Activated T-helper 1 cell treated with anti-CD3 and anti-CD28 coated beads, Interleukin-12 subunit alpha, Interleukin-12 subunit beta, Interleukin-2, Interleukin-4 antibody, amounts not matched to agents 30 ng/mL and 10 ng/mL and 1 ng/mL, durations not matched to agents 14 hours and 24 hours and 36 hours (primary cell): ENCODE measurements at regions of chr10 and their contacts with region 1.

Region 1: DNA sequence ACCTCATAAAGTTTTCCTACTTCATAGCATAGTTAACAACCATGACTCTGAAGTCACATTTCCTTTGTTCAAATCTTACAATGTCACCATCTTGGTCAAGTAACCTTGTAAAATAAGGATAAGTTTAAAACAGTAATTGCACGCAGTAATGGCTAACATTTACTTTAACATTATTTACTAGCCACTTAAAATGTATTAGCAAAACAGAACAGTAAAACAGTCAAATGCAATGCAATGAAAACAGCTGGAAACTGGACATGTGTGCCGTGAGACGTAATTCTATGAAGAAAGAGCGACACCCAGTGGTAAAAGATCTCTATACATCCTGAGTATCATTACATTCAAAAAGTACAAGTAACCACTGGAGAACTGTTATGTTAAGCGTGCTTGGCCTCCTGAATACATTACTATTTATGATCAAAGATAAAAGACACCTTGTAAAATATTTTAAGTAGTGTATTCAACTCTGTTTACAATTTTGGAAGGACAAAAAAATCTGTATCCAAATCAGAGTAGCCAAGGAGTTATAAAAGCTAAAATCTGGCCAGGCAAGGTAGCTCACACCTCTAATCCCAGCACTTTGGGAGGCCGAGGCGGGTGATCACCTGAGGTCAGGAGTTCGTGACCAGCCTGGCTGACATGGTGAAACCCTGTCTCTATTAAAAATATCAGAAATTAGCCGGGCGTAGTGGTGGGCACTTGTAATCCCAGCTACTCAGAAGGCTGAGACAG is 27.2 kb downstream of the ATE1 start:
- DNase-seq: no peak
- H3K4me3 Mint-ChIP-seq: no peak overlapping the region
- H3K27ac Mint-ChIP-seq: no peak overlapping the region
- H3K4me1 Mint-ChIP-seq: peaks cover 5% of the 10 kb centered on the region
- H3K27me3 Mint-ChIP-seq: no peaks in the 10 kb centered on the region

Region 2: DNA sequence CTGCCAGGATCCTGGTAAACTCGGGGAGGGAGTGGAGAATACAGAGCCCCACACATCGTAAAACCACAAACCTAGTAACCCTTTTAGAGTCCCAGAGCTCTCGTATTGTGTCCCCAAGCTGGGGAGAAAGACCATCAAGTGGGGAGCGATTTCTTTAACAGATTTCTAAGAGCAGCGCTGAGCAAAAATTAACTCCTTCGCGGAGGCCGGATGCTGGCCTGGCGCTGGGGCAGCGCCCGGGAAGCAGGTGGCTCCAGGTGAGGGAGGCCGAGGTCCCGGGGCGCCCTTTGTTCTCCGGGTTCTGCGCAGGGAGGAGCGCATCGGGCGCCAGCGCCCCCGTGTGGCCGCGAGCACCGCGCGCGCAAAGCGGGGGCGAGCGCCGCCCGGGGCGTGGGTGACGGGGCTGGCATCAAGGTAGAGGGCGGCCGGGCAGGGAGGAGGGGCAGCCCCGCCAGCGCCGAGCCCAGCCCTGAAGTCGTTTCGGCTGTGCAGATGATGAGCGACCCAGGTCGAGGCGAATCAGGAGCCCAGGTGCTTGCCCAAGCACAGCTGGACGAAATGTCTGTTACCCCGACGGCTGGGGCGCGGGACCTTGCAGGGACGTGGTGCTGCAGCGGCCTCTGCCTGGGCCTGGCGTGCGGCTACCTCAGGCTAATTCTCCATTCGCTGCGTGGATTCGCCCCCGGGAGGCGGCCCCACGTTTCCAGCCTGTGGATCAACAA is 292.0 kb before region 1 on chr10:
- intact Hi-C with region 1: loop called (anchors 10 kb)
- DNase-seq: no peak
- H3K4me3 Mint-ChIP-seq: no peak overlapping the region
- H3K27ac Mint-ChIP-seq: no peak overlapping the region
- H3K4me1 Mint-ChIP-seq: no peaks in the 10 kb centered on the region
- H3K27me3 Mint-ChIP-seq: peaks cover 2% of the 10 kb centered on the region

Region 3: GRCh38 chr10:121747163-121747775 is 153.3 kb before region 1 on chr10:
- intact Hi-C with region 1: loop called (anchors 5 kb)
- DNase-seq: no peak
- H3K4me3 Mint-ChIP-seq: no peak overlapping the region
- H3K27ac Mint-ChIP-seq: no peak overlapping the region
- H3K4me1 Mint-ChIP-seq: no peaks in the 10 kb centered on the region
- H3K27me3 Mint-ChIP-seq: peaks cover 3% of the 10 kb centered on the region

Region 4: GRCh38 chr10:121823993-121824463 is 76.6 kb before region 1 on chr10:
- intact Hi-C with region 1: loop called (anchors 1 kb)
- DNase-seq: no peak
- H3K4me3 Mint-ChIP-seq: no peak overlapping the region
- H3K27ac Mint-ChIP-seq: no peak overlapping the region
- H3K4me1 Mint-ChIP-seq: no peaks in the 10 kb centered on the region
- H3K27me3 Mint-ChIP-seq: no peaks in the 10 kb centered on the region